ENCODE measurements at regions of chr22 and their contacts with region 1.

Region 1: GRCh38 chr22:22748297-22748743 is 103.9 kb downstream of the GGTLC2 start:
- DNase-seq: peak; percentile 68
- H3K4me3 Mint-ChIP-seq: no peak overlapping the region
- H3K27ac Mint-ChIP-seq: no peak overlapping the region
- H3K4me1 Mint-ChIP-seq: peaks cover 6% of the 10 kb centered on the region
- H3K27me3 Mint-ChIP-seq: peaks cover 25% of the 10 kb centered on the region
- CTCF ChIP-seq: peak; percentile 42

Region 2: GRCh38 chr22:22692707-22693530 is 55.4 kb before region 1 on chr22:
- CTCF ChIA-PET with region 1: interaction called, 18 read pairs
- intact Hi-C with region 1: loop called (anchors 1 kb)
- DNase-seq: peak; percentile 97
- H3K4me3 Mint-ChIP-seq: peak overlapping the region; percentile 56
- H3K27ac Mint-ChIP-seq: peak overlapping the region; percentile 85
- H3K4me1 Mint-ChIP-seq: peaks cover 49% of the 10 kb centered on the region
- H3K27me3 Mint-ChIP-seq: no peaks in the 10 kb centered on the region
- CTCF ChIP-seq: peak; percentile 96

Region 3: GRCh38 chr22:22779213-22779612 is 30.9 kb after region 1 on chr22:
- CTCF ChIA-PET with region 1: no interaction called
- intact Hi-C with region 1: no loop called
- DNase-seq: no peak
- H3K4me3 Mint-ChIP-seq: no peak overlapping the region
- H3K27ac Mint-ChIP-seq: no peak overlapping the region
- H3K4me1 Mint-ChIP-seq: peaks cover 8% of the 10 kb centered on the region
- H3K27me3 Mint-ChIP-seq: peaks cover 87% of the 10 kb centered on the region
- CTCF ChIP-seq: no peak

Region 4: GRCh38 chr22:22810018-22810427 is 61.7 kb after region 1 on chr22:
- CTCF ChIA-PET with region 1: no interaction called
- intact Hi-C with region 1: no loop called
- DNase-seq: peak; percentile 56
- H3K4me3 Mint-ChIP-seq: no peak overlapping the region
- H3K27ac Mint-ChIP-seq: no peak overlapping the region
- H3K4me1 Mint-ChIP-seq: no peaks in the 10 kb centered on the region
- H3K27me3 Mint-ChIP-seq: peaks cover 73% of the 10 kb centered on the region
- CTCF ChIP-seq: no peak

Region 5: DNA sequence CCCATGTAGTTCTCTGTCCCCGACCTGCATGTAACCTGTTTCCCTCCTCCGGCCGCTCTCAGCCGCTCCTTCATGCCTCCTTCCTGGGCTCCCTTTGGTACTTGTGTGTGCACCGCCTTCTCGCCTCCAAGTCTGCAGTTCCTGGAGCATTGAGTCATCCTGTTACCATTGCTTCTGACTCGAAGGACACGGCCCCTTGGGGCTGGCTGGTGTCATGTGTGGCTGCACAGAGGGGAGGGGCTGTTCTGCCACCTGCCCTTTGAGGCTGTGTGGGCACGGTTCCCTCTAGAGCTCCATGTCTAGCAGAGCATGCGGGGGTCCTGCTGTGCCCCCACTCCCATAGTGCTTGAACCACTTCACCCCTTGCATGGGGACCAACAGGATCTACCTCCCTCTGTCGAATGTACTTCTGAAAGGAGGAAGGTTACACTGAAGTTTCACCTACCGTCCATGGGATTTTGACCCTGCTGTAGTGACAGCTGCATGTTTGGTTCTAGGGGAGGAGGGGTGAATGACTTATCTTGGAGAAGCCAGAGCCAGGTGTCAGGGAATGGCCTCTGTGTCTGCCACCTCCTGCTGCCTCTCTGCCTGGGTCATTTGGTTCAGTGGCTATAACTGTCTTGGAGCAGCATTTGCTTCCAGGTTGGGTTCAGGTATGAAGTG is 471.6 kb after region 1 on chr22:
- CTCF ChIA-PET with region 1: no interaction called
- intact Hi-C with region 1: no loop called
- DNase-seq: peak; percentile 64
- H3K4me3 Mint-ChIP-seq: peak overlapping the region; percentile 34
- H3K27ac Mint-ChIP-seq: peak overlapping the region; percentile 24
- H3K4me1 Mint-ChIP-seq: peaks cover 83% of the 10 kb centered on the region
- H3K27me3 Mint-ChIP-seq: no peaks in the 10 kb centered on the region
- CTCF ChIP-seq: no peak